Mammary epithelial cell (primary cell): ENCODE measurements at regions of chr9 and their contacts with region 1.

Region 1: DNA sequence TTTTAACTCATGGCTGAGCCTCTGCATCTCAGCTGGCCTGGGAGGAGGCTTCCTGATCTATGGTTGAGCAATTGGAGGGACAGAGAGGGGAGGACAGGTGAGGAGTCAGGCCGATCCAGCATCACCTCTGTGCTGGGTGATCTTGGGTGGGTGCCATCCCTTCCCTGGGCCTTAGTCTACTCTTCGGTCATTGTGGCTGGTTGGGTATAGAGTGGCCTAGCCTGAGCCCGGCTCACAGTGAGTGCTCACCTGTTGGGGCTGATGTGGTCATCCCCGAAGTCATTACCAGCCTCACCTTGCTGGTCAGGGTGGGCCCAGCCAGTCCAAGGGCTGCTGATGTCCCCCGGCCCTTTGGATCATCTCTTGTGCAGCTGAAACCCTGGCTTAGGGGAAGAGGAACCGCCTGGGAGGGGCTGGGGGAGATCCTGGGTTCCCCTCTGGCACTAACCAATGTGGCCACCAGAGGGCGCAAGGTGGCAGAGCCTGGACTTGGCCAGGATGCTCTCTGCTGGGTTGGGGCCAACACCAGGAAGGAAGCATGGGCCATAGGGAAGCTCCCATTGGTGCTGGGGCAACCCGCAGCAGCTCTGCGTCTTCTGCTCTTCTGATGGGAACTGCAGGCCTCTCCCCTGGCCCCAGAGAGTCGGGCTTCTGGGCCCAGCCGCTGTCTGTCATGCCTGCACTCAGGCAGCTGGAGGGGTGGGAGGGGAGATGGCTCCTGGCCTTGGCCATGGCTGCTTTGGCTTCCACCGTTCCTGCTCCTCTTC is 17.3 kb upstream of the ODF2 start:
- DNase-seq: peak; percentile 47
- H3K4me3 ChIP-seq: no peak overlapping the region
- H3K27ac ChIP-seq: no peak overlapping the region
- H3K4me1 ChIP-seq: no peaks in the 10 kb centered on the region
- H3K27me3 ChIP-seq: no peaks in the 10 kb centered on the region
- CTCF ChIP-seq: peak; percentile 78 to 96

Region 2: GRCh38 chr9:128484686-128485413 is 46.3 kb after region 1 on chr9:
- CTCF ChIA-PET with region 1: no interaction called
- dilution Hi-C with region 1: loop called (anchors 5 kb)
- in situ Hi-C with region 1: no loop called
- intact Hi-C with region 1: no loop called
- DNase-seq: no peak
- H3K4me3 ChIP-seq: no peak overlapping the region
- H3K27ac ChIP-seq: no peak overlapping the region
- H3K4me1 ChIP-seq: no peaks in the 10 kb centered on the region
- H3K27me3 ChIP-seq: no peaks in the 10 kb centered on the region
- CTCF ChIP-seq: no peak